ENCODE measurements at regions of chr15 and their contacts with region 1.

Region 1: DNA sequence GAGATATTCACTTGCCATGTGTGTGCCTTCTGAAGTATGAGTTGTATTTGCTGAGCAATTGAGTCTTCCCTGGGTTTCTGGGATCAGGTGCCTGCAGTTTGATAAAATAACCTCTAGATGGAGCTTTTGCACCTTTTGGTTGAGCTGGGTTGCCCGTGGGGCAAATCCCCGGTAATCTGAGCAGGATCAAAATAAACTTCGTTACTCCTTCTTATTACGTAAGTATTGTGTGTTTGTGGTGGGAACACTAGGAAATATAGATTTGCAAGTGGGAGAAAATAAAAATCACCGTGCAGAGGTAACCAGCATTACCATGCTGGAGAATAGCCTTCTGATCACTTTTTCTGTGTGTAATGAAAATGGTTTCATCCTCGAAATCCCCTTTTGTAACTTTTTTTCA is 277.4 kb upstream of the NR2E3 start:
- DNase-seq: peak in 1 of 7 donors; percentile 32
- H3K4me3 ChIP-seq: no peak overlapping the region
- H3K27ac ChIP-seq: no peak overlapping the region
- H3K4me1 ChIP-seq: no peaks in the 10 kb centered on the region
- H3K27me3 ChIP-seq: no peaks in the 10 kb centered on the region
- CTCF ChIP-seq: peak in 5 of 6 experiments; percentile 29 to 59 (median 42)
- POLR2A ChIP-seq: no peak

Region 2: DNA sequence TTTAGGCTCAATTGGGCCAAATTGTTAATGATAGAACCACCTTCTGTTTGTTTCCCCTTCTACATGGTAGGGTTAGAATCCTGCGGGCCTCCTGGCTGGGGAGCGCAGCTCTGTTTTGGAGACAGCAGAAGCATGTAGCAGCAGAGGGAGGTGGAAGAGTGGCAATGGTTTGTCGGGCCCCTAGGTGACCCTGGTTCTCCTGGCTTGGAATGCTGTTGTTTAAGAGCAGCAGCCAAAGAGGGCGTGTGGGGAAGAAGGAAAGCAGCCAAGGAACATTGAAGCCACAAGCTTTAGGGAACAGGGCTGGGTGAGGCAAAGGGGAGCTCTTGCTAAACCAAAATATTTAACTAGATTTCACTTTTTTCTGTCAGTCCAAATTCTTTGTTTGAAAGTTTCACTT is 63.7 kb after region 1 on chr15:
- intact Hi-C with region 1: loop called in 1 of 2 experiments (anchors 10 kb)
- DNase-seq: peak in 6 of 7 donors; percentile 24 to 72 (median 56)
- H3K4me3 ChIP-seq: no peak overlapping the region
- H3K27ac ChIP-seq: no peak overlapping the region
- H3K4me1 ChIP-seq: peaks cover 0 to 15% of the 10 kb centered on the region in 2 donors
- H3K27me3 ChIP-seq: no peaks in the 10 kb centered on the region
- CTCF ChIP-seq: no peak
- POLR2A ChIP-seq: no peak

Measured in adrenal gland (tissue), 19 donors.